ENCODE measurements at regions of chr11 and their contacts with region 1.

Region 1: DNA sequence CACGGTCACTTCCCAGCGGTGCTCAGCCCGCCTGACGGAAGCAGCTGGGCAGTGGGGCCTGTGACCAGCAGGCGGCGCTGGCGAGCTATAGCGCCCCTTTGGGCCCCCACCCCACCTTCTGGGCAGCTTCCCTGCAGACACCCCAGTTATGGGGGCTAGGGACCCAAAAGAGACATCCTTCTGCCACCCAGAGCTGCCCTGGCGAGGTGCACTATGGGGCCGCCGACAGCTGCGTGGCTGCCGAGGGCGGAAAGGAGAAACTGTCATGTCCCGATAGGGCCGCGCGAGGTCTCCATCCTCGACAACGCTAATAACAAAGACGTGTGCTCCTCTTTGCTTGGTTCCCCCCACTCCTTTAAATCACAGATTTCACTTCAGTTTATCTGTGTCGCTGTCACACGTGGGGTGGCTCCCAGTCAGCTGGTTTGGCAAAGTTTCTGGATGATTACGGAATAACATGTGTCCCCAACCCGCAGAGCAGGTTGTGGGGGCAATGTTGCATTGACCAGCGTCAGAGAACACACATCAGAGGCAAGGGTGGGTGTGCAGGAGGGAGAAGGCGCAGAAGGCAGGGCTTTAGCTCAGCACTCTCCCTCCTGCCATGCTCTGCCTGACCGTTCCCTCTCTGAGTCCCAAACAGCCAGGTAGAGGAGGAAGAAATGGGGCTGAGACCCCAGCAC is 674 bp upstream of the MYO7A start:
- DNase-seq: peak; percentile 20 to 76 (median 51)
- ATAC-seq: peak; percentile 83
- H3K4me3 ChIP-seq: peak overlapping the region; percentile 56
- H3K4me3 Mint-ChIP-seq: peak overlapping the region; percentile 74
- H3K27ac ChIP-seq: no peak overlapping the region
- H3K27ac Mint-ChIP-seq: no peak overlapping the region
- H3K4me1 ChIP-seq: peaks cover 14% of the 10 kb centered on the region
- H3K4me1 Mint-ChIP-seq: peaks cover 12% of the 10 kb centered on the region
- H3K27me3 ChIP-seq: peaks cover 3 to 4% of the 10 kb centered on the region in 2 experiments
- H3K27me3 Mint-ChIP-seq: no peaks in the 10 kb centered on the region
- CTCF ChIP-seq: peak; percentile 99

Region 2: DNA sequence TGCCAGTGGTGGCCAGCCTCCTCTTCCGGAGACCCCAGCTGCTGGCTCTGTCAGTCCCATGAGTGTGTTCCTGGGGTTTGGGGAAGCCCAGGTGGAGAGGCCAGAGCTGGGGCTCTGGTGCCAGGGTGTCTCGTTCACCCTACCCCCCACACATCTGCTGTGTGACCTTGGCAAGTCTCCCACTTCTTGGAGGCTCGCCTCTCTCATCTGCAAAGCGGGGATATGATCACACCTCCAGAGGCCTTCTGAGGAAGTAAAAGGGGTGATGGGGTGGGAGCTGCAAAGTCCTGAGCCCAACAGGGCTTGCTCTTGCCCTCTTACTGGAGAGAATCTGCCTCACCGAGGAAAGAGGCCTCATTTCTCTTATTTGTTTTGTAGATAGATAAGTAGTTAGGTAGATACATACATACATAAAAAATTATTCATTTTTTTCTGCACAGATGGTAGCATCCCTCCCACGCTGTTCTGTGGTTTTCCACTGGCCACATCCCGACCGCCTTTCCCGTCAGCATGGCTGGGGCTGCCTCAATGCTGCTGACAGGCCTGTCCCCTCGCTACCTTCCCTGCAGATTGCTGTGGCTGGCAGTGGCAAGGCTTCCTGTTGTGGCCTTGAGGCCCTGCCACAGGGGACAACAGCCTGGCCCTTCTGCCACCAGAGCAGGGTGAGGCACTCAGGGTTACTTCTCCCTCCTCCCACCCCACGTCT is 24.6 kb after region 1 on chr11:
- CTCF ChIA-PET with region 1: no interaction called
- POLR2A ChIA-PET with region 1: no interaction called
- intact Hi-C with region 1: no loop called
- DNase-seq: peak in 12 of 14 experiments; percentile 9 to 72 (median 20)
- ATAC-seq: peak; percentile 79
- H3K4me3 ChIP-seq: no peak overlapping the region
- H3K4me3 Mint-ChIP-seq: no peak overlapping the region
- H3K27ac ChIP-seq: peak overlapping the region in 1 of 2 donors; percentile 22
- H3K27ac Mint-ChIP-seq: peak overlapping the region; percentile 13
- H3K4me1 ChIP-seq: peaks cover 63% of the 10 kb centered on the region
- H3K4me1 Mint-ChIP-seq: peaks cover 37% of the 10 kb centered on the region
- H3K27me3 ChIP-seq: no peaks in the 10 kb centered on the region
- H3K27me3 Mint-ChIP-seq: no peaks in the 10 kb centered on the region
- CTCF ChIP-seq: no peak

Region 3: GRCh38 chr11:77187776-77188632 is 60.6 kb after region 1 on chr11:
- CTCF ChIA-PET with region 1: interaction called, 23 read pairs
- POLR2A ChIA-PET with region 1: no interaction called
- intact Hi-C with region 1: loop called (anchors 1 kb)
- DNase-seq: peak; percentile 29 to 78 (median 49)
- ATAC-seq: peak; percentile 65
- H3K4me3 ChIP-seq: no peak overlapping the region
- H3K4me3 Mint-ChIP-seq: no peak overlapping the region
- H3K27ac ChIP-seq: no peak overlapping the region
- H3K27ac Mint-ChIP-seq: no peak overlapping the region
- H3K4me1 ChIP-seq: no peaks in the 10 kb centered on the region
- H3K4me1 Mint-ChIP-seq: no peaks in the 10 kb centered on the region
- H3K27me3 ChIP-seq: no peaks in the 10 kb centered on the region
- H3K27me3 Mint-ChIP-seq: no peaks in the 10 kb centered on the region
- CTCF ChIP-seq: peak; percentile 78

Region 4: DNA sequence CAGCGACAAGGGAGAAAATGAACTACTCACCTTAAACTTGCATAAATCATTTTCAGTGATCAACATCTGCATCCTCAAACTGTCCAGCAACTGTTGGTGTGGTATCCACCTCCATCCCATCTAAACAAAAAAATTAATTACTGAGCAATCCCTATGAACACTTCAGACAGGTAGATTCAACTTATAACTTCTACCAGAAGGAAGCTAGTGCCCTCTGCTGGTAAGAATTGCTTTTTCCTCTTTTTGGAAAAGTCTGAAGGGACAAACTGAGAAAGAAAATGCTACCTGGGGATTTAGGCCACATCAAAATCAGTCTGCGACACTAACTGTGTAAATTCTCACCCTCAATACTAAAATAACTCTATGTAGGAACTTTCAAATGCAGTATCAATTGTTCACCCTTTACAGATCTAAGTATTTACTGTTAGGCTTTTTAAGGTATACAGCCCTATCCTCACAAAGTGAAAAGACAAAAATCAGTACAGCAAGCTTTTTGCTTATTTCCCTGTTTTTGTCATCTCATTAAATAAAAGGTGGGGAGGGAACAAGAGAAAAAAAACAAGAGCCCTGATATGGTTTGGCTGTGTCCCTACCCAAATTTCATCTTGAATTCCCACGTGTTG is 492.3 kb after region 1 on chr11:
- CTCF ChIA-PET with region 1: interaction called, 13 read pairs
- POLR2A ChIA-PET with region 1: no interaction called
- intact Hi-C with region 1: loop called in 1 of 2 experiments (anchors 2 kb)
- DNase-seq: peak in 4 of 14 experiments; percentile 16 to 67 (median 60)
- ATAC-seq: peak; percentile 41
- H3K4me3 ChIP-seq: no peak overlapping the region
- H3K4me3 Mint-ChIP-seq: no peak overlapping the region
- H3K27ac ChIP-seq: no peak overlapping the region
- H3K27ac Mint-ChIP-seq: no peak overlapping the region
- H3K4me1 ChIP-seq: no peaks in the 10 kb centered on the region
- H3K4me1 Mint-ChIP-seq: no peaks in the 10 kb centered on the region
- H3K27me3 ChIP-seq: no peaks in the 10 kb centered on the region
- H3K27me3 Mint-ChIP-seq: no peaks in the 10 kb centered on the region
- CTCF ChIP-seq: peak; percentile 82

Measured in CD4-positive, alpha-beta T cell (primary cell).